Activated B cell treated with CpG ODN at 0.5 μM for 24 hours (primary cell): ENCODE measurements at regions of chr7 and their contacts with region 1.

Region 1: GRCh38 chr7:23531794-23532489 is at the start of gene TRA2A:
- DNase-seq: peak; percentile 97
- ATAC-seq: peak; percentile 89
- H3K4me3 Mint-ChIP-seq: peak within 1 kb of the TSS; percentile 99
- H3K27ac Mint-ChIP-seq: peak within 1 kb of the TSS; percentile 100
- H3K4me1 Mint-ChIP-seq: peaks cover 49% of the 10 kb centered on the region
- H3K27me3 Mint-ChIP-seq: no peaks in the 10 kb centered on the region
- CTCF ChIP-seq: no peak
- total RNA-seq, gene TRA2A: 123 and 144 TPM in 2 replicates

Region 2: GRCh38 chr7:23105644-23106056 is 426.3 kb before region 1 on chr7 and contains the start of gene KLHL7:
- CTCF ChIA-PET with region 1: no interaction called
- POLR2A ChIA-PET with region 1: no interaction called
- intact Hi-C with region 1: loop called (anchors 5 kb)
- DNase-seq: peak; percentile 98
- ATAC-seq: peak; percentile 95
- H3K4me3 Mint-ChIP-seq: peak within 1 kb of the TSS; percentile 94
- H3K27ac Mint-ChIP-seq: peak within 1 kb of the TSS; percentile 97
- H3K4me1 Mint-ChIP-seq: peaks cover 32% of the 10 kb centered on the region
- H3K27me3 Mint-ChIP-seq: no peaks in the 10 kb centered on the region
- CTCF ChIP-seq: no peak
- total RNA-seq, gene KLHL7: 12.2 and 13.4 TPM in 2 replicates

Region 3: GRCh38 chr7:23175938-23176337 is 356.0 kb before region 1 on chr7:
- CTCF ChIA-PET with region 1: no interaction called
- POLR2A ChIA-PET with region 1: no interaction called
- intact Hi-C with region 1: no loop called
- DNase-seq: no peak
- ATAC-seq: no peak
- H3K4me3 Mint-ChIP-seq: no peak overlapping the region
- H3K27ac Mint-ChIP-seq: no peak overlapping the region
- H3K4me1 Mint-ChIP-seq: peaks cover 3% of the 10 kb centered on the region
- H3K27me3 Mint-ChIP-seq: no peaks in the 10 kb centered on the region
- CTCF ChIP-seq: no peak

Region 4: GRCh38 chr7:23298885-23299769 is 232.8 kb before region 1 on chr7 and contains the start of gene MALSU1:
- CTCF ChIA-PET with region 1: no interaction called
- POLR2A ChIA-PET with region 1: interaction called, 4 read pairs
- intact Hi-C with region 1: loop called (anchors 1 kb)
- DNase-seq: peak; percentile 95
- ATAC-seq: peak; percentile 99
- H3K4me3 Mint-ChIP-seq: peak within 1 kb of the TSS; percentile 89
- H3K27ac Mint-ChIP-seq: peak within 1 kb of the TSS; percentile 95
- H3K4me1 Mint-ChIP-seq: peaks cover 39% of the 10 kb centered on the region
- H3K27me3 Mint-ChIP-seq: peaks cover 4% of the 10 kb centered on the region
- CTCF ChIP-seq: no peak
- total RNA-seq, gene MALSU1: 42.0 and 42.6 TPM in 2 replicates

Region 5: GRCh38 chr7:23338920-23339319 is 193.0 kb before region 1 on chr7:
- CTCF ChIA-PET with region 1: no interaction called
- POLR2A ChIA-PET with region 1: no interaction called
- intact Hi-C with region 1: no loop called
- DNase-seq: no peak
- ATAC-seq: no peak
- H3K4me3 Mint-ChIP-seq: no peak overlapping the region
- H3K27ac Mint-ChIP-seq: no peak overlapping the region
- H3K4me1 Mint-ChIP-seq: peaks cover 2% of the 10 kb centered on the region
- H3K27me3 Mint-ChIP-seq: no peaks in the 10 kb centered on the region
- CTCF ChIP-seq: no peak

Region 6: DNA sequence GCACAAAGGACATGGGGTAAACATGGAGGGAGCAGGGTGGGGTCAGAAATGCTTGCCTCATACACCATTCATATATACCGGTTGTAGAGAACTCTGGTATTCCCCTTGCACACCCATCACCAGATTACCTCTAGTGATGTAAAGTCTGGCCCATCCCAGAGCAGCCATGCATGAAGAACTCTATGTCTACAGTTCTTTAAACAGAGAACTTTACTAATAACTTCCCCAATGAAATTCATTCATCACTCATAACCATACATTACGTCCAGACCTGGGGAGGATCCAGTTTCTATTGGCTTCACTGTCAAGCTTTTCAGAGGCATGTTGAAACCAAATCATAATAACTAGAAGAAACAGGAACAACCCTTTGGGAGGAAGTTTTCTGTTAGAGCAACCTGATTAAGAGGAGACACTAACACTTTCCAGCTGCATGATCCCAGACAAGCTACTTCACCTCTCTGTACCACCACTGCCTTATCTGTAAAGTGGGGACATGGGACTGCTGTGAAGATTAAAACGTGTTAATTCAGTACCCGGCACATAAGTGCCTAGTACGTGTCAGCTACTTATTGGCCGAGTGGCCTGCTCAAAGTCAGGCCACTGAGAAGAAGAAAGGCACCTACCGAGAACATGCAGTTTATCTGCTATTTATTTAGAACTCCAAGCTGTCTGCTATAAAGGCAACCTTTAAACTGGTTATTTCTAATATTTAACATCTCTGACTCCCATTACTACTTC is 121.3 kb before region 1 on chr7:
- CTCF ChIA-PET with region 1: no interaction called
- POLR2A ChIA-PET with region 1: no interaction called
- intact Hi-C with region 1: loop called (anchors 5 kb)
- DNase-seq: no peak
- ATAC-seq: peak; percentile 93
- H3K4me3 Mint-ChIP-seq: peak overlapping the region; percentile 2
- H3K27ac Mint-ChIP-seq: peak overlapping the region; percentile 79
- H3K4me1 Mint-ChIP-seq: peaks cover 28% of the 10 kb centered on the region
- H3K27me3 Mint-ChIP-seq: no peaks in the 10 kb centered on the region
- CTCF ChIP-seq: no peak

Region 7: GRCh38 chr7:23514755-23515154 is 17.2 kb before region 1 on chr7:
- CTCF ChIA-PET with region 1: interaction called, 3 read pairs
- POLR2A ChIA-PET with region 1: interaction called, 4 read pairs
- intact Hi-C with region 1: loop called (anchors 2 kb)
- DNase-seq: no peak
- ATAC-seq: no peak
- H3K4me3 Mint-ChIP-seq: no peak overlapping the region
- H3K27ac Mint-ChIP-seq: no peak overlapping the region
- H3K4me1 Mint-ChIP-seq: no peaks in the 10 kb centered on the region
- H3K27me3 Mint-ChIP-seq: no peaks in the 10 kb centered on the region
- CTCF ChIP-seq: no peak